Left colon (tissue), 2 donors: ENCODE measurements at regions of chr13 and their contacts with region 1.

Region 1: GRCh38 chr13:30465585-30466357 is at the start of gene HMGB1:
- DNase-seq: peak; percentile 96 to 99
- ATAC-seq: peak; percentile 91
- total RNA-seq, gene HMGB1: 209 to 212 TPM

Region 2: GRCh38 chr13:30422054-30422839 is 43.5 kb before region 1 on chr13 and contains the start of gene UBE2L5:
- intact Hi-C with region 1: loop called in 1 of 2 experiments (anchors 5 kb)
- DNase-seq: peak; percentile 81 to 82
- ATAC-seq: peak; percentile 84
- total RNA-seq, gene UBE2L5: not detected

Region 3: GRCh38 chr13:30572859-30573275 is 107.1 kb after region 1 on chr13:
- intact Hi-C with region 1: loop called in 1 of 2 experiments (anchors 10 kb)
- DNase-seq: no peak
- ATAC-seq: peak; percentile 75

Region 4: GRCh38 chr13:30617315-30618185 is 151.8 kb after region 1 on chr13 and contains the start of gene USPL1:
- intact Hi-C with region 1: loop called in 1 of 2 experiments (anchors 10 kb)
- DNase-seq: peak; percentile 98
- ATAC-seq: peak; percentile 89
- total RNA-seq, gene USPL1: 9.4 to 10.3 TPM